ENCODE measurements at regions of chr12 and their contacts with region 1.

Region 1: DNA sequence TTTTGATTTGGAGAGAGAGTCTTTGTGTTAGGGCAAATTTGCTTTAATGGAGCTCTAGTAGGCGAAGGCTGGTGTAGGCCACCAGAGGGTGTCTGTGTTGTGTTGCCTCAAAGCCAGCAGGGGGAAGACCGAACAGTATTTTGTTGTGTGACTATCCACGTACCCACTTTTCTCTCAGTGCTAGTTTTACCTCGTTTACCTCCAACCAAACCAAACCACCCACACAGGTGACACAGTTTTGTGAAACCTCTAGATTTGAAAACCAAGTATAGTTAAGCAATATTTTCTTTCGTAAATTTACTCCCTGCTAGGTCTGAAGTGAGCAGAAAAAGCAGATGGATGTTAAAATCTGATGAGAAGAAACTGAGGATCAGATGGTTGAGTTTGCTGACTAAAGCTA is 36.3 kb upstream of the NPFF start:
- DNase-seq: no peak
- ATAC-seq: peak; percentile 93
- H3K4me3 Mint-ChIP-seq: no peak overlapping the region
- H3K27ac Mint-ChIP-seq: peak overlapping the region; percentile 67
- H3K4me1 Mint-ChIP-seq: peaks cover 5% of the 10 kb centered on the region
- H3K27me3 Mint-ChIP-seq: no peaks in the 10 kb centered on the region
- CTCF ChIP-seq: no peak

Region 2: DNA sequence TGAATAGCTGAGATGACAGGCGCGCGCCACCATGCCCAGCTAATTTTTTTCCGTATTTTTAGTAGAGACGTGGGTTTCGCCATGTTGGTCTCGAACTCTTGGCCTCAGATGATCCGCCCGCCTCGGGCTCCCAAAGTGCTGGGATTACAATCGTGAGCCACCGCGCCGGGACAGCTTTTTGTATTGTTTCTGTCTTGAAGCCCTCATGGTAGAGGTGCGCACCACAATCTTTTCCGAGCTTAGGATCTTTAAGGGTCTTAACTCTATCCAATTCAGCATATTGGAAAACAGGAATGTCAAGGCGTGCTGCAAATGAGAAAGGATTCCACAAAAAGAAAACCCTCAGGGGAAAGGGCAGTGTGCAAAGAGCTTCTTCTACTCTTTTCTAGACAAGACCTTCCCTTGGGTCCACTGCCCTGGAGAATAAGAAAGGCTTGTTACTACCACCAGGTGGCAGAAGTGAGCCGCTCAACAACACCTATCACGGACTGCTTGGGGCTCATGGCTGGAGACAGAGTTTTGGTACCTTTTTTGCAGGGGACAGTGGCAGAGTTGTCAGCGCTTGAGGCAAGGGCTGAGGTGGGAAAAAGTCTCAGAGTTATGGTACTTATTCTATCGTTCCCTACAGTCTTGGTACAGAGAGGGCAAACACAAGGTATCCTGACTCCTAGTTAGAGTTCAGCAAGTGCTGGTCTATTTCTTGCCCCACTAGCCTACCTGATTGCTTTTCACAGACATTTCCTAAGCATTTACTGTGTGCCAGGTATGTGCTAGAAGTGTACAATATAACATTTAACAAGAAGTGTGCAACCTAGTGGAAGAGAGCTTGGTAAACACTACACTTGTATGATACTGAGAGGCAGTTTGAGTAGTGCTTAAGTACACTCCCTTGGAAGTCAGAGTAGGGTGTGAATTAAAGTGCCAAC is 190.9 kb before region 1 on chr12:
- CTCF ChIA-PET with region 1: no interaction called
- POLR2A ChIA-PET with region 1: no interaction called
- intact Hi-C with region 1: no loop called
- DNase-seq: peak; percentile 56
- ATAC-seq: peak; percentile 100
- H3K4me3 Mint-ChIP-seq: no peak overlapping the region
- H3K27ac Mint-ChIP-seq: peak overlapping the region; percentile 37
- H3K4me1 Mint-ChIP-seq: peaks cover 4% of the 10 kb centered on the region
- H3K27me3 Mint-ChIP-seq: no peaks in the 10 kb centered on the region
- CTCF ChIP-seq: no peak

Region 3: DNA sequence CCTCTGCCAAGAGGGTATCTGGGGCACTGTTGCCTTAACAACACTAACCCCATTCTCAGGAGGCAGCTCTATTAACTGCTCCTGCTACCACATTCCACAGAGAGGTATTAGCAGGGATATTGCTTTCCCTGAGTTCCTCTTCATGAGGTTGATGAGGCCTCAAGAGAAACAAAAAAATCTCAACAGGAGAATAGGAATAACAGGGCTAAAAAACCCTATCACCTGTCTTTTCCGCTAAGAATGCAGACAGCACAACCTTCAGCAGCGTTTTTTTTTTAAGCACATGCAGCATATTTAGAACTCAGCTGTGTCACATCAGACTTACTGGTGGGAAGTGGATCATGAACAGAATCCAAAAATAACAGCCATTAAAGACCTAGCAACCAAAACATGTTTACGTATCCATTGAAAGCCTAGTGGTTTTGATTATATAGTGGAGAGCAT is 53.4 kb after region 1 on chr12:
- CTCF ChIA-PET with region 1: no interaction called
- POLR2A ChIA-PET with region 1: no interaction called
- intact Hi-C with region 1: loop called (anchors 10 kb)
- DNase-seq: no peak
- ATAC-seq: no peak
- H3K4me3 Mint-ChIP-seq: no peak overlapping the region
- H3K27ac Mint-ChIP-seq: no peak overlapping the region
- H3K4me1 Mint-ChIP-seq: peaks cover 22% of the 10 kb centered on the region
- H3K27me3 Mint-ChIP-seq: no peaks in the 10 kb centered on the region
- CTCF ChIP-seq: no peak

Measured in activated B cell treated with CpG ODN at 0.5 μM for 24 hours (primary cell).